ENCODE measurements at regions of chr13 and their contacts with region 1.

Region 1: DNA sequence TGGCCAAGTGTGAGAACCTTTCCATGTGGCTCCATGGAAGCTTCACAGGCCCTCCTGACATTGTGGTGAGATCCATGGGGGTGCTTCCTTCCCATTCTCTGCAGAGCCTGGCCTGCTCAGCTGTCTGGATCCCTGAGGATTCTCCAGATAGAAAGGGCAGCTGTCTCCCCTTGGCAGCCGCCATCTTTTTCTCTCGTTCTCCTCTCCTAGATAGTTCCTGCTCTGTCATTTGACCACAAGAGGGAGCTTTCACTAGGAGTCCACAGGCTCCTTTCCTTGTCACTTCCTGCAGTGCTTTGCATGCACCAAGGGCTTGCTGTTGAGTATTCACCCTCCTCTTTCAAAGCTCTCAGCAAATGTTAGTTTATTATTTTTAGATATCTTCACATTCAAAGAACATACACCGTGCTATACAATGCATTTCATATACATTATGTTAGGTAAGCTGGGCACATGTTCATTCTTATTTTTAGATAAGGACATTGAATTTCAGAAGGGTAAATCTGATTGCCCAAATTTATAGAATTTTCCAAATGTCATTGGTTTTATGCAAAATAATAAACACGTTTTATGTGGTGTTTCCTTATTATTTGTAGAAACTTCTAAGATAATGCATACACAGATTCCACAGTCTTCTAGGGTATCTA is 133.2 kb downstream of the FRY start:
- DNase-seq: peak; percentile 75
- ATAC-seq: peak; percentile 100
- H3K4me3 ChIP-seq: no peak overlapping the region
- H3K27ac ChIP-seq: no peak overlapping the region
- H3K4me1 ChIP-seq: peaks cover 0 to 4% of the 10 kb centered on the region in 2 experiments; a peak in 1 of 4 replicates
- H3K27me3 ChIP-seq: no peaks in the 10 kb centered on the region
- CTCF ChIP-seq: peak; percentile 47 to 96 (median 84)
- POLR2A ChIP-seq: no peak
- RAD21 ChIP-seq: peak; percentile 46

Region 2: DNA sequence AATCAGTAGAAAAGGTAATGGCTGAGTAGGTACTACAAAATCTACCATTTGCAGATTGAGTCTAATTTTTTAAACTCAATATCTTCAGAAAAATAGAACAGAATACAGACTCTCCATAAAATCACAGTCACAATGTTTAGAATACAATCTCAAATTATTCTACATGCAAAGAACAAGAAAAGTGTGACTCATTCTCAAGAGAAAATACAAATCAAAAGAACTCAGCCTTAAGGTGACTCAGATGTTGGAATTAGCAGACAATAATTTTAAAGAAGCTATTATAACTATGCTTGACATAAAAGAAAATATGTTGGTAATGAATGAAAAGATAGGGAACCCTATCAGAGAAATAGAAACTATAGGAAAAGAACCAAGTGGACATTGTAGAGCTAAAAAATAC is 346.5 kb before region 1 on chr13:
- CTCF ChIA-PET with region 1: no interaction called
- POLR2A ChIA-PET with region 1: no interaction called
- RAD21 ChIA-PET with region 1: no interaction called
- intact Hi-C with region 1: no loop called
- DNase-seq: no peak
- ATAC-seq: no peak
- H3K4me3 ChIP-seq: no peak overlapping the region
- H3K27ac ChIP-seq: no peak overlapping the region
- H3K4me1 ChIP-seq: no peaks in the 10 kb centered on the region
- H3K27me3 ChIP-seq: no peaks in the 10 kb centered on the region
- CTCF ChIP-seq: no peak
- POLR2A ChIP-seq: no peak
- RAD21 ChIP-seq: no peak

Region 3: DNA sequence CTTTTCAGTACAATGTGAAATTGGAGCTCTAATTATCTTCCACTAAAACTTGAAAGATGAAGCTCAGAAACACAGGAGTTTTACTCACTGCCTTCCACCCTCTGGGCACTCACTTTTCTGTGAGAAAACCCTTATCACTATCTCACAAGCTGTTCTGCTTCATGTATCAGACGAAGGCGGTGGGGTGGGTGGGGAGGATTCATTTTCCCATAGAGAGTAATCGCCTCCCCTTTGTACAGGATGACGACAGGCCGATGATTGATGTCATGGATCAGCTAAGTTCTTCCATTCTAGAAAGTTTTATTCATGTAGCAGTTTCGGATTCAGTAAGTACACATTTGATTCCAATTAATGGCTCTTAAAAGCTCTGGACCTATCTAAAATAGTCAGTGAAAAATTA is 10.6 kb after region 1 on chr13:
- CTCF ChIA-PET with region 1: interaction called, 38 read pairs
- POLR2A ChIA-PET with region 1: interaction called, 3 read pairs
- RAD21 ChIA-PET with region 1: no interaction called
- intact Hi-C with region 1: no loop called
- DNase-seq: no peak
- ATAC-seq: no peak
- H3K4me3 ChIP-seq: no peak overlapping the region
- H3K27ac ChIP-seq: no peak overlapping the region
- H3K4me1 ChIP-seq: no peaks in the 10 kb centered on the region
- H3K27me3 ChIP-seq: no peaks in the 10 kb centered on the region
- CTCF ChIP-seq: no peak
- POLR2A ChIP-seq: no peak
- RAD21 ChIP-seq: no peak

Region 4: DNA sequence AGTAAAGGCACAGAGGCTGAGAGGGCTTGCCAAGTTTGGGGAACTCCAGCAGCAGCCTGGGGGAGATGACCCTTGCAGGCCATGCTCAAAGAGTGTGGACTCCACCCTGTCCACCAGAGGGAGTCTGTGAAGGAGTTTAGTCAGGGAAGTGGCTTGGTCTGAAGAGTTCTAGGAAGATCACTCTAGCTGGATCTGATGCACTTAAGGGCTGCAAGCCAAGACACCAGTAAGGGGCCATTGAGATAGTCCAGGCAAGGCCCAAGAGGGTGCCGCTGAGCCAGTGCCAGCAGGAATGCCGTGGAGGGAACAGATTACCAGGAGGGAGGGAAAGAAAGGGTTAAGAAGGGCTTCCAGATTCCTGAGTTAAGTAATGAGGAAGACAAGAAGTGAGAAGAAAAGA is 81.7 kb after region 1 on chr13:
- CTCF ChIA-PET with region 1: interaction called, 11 read pairs
- POLR2A ChIA-PET with region 1: no interaction called
- RAD21 ChIA-PET with region 1: no interaction called
- intact Hi-C with region 1: no loop called
- DNase-seq: peak; percentile 66
- ATAC-seq: peak; percentile 100
- H3K4me3 ChIP-seq: no peak overlapping the region
- H3K27ac ChIP-seq: no peak overlapping the region
- H3K4me1 ChIP-seq: peaks cover 0 to 5% of the 10 kb centered on the region in 2 experiments; a peak in 1 of 4 replicates
- H3K27me3 ChIP-seq: no peaks in the 10 kb centered on the region
- CTCF ChIP-seq: peak; percentile 49 to 89 (median 79); a peak in 5 of 6 replicates
- POLR2A ChIP-seq: no peak
- RAD21 ChIP-seq: peak; percentile 53